ENCODE measurements at regions of chr17 and their contacts with region 1.

Region 1: GRCh38 chr17:29568331-29569244 is at the start of gene TP53I13:
- DNase-seq: peak; percentile 92
- ATAC-seq: peak; percentile 62
- H3K4me3 Mint-ChIP-seq: peak within 1 kb of the TSS; percentile 86
- H3K27ac Mint-ChIP-seq: peak within 1 kb of the TSS; percentile 91
- H3K4me1 Mint-ChIP-seq: peaks cover 26% of the 10 kb centered on the region
- H3K27me3 Mint-ChIP-seq: no peaks in the 10 kb centered on the region
- CTCF ChIP-seq: no peak
- total RNA-seq, gene TP53I13: 46.7 to 50.2 TPM

Region 2: GRCh38 chr17:29533976-29534375 is 34.6 kb before region 1 on chr17:
- CTCF ChIA-PET with region 1: interaction called, 21 read pairs
- POLR2A ChIA-PET with region 1: interaction called, 4 read pairs
- intact Hi-C with region 1: no loop called
- DNase-seq: no peak
- ATAC-seq: no peak
- H3K4me3 Mint-ChIP-seq: no peak overlapping the region
- H3K27ac Mint-ChIP-seq: peak overlapping the region; percentile 14
- H3K4me1 Mint-ChIP-seq: no peaks in the 10 kb centered on the region
- H3K27me3 Mint-ChIP-seq: no peaks in the 10 kb centered on the region
- CTCF ChIP-seq: no peak

Region 3: DNA sequence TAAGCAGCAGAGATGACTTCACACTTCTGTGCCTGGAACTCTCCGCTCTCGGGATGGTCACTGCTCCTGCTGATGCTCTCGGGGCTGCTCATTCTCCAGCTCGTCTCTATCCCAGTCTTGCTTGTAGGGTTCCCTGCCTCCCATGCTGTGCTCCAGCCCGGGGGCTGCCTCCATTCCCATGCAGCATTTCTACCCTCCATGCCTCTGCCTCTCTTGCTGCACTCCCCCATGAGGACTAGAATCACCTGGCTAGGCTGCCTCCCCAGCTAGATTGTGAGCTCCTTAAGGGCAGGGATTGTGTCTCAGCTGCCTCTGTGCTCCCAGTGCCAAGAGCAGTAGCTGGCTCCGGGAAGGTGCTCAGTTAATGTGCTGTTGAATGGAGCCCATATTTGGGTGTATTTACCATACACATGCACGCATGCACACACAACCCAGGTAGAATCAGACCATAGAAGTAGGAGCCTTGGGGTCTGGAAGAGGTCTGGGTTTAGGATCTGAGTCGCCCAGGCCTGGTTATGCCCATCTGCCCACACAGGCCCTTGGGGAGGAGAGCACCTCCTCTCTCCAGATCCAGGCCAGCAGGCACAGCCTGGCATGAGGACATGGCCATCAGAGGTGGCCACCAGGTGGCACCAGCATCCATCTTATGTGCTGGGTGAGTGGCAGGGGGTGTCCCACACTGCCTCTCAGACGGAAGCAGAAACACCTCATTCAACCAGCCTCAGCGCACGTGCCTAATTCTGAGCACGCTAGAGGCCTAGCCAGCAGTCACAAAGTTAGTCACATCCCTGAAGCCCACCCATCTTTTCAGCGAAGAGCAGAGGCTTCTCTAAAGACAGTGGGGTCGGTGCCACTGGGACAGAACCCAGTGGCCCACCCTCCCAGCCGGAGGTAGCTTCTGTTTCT is 11.5 kb after region 1 on chr17:
- CTCF ChIA-PET with region 1: interaction called, 33 read pairs
- POLR2A ChIA-PET with region 1: interaction called, 11 read pairs
- intact Hi-C with region 1: no loop called
- DNase-seq: peak; percentile 97
- ATAC-seq: peak; percentile 97
- H3K4me3 Mint-ChIP-seq: no peak overlapping the region
- H3K27ac Mint-ChIP-seq: peak overlapping the region; percentile 89
- H3K4me1 Mint-ChIP-seq: peaks cover 27% of the 10 kb centered on the region
- H3K27me3 Mint-ChIP-seq: no peaks in the 10 kb centered on the region
- CTCF ChIP-seq: peak; percentile 83

Region 4: DNA sequence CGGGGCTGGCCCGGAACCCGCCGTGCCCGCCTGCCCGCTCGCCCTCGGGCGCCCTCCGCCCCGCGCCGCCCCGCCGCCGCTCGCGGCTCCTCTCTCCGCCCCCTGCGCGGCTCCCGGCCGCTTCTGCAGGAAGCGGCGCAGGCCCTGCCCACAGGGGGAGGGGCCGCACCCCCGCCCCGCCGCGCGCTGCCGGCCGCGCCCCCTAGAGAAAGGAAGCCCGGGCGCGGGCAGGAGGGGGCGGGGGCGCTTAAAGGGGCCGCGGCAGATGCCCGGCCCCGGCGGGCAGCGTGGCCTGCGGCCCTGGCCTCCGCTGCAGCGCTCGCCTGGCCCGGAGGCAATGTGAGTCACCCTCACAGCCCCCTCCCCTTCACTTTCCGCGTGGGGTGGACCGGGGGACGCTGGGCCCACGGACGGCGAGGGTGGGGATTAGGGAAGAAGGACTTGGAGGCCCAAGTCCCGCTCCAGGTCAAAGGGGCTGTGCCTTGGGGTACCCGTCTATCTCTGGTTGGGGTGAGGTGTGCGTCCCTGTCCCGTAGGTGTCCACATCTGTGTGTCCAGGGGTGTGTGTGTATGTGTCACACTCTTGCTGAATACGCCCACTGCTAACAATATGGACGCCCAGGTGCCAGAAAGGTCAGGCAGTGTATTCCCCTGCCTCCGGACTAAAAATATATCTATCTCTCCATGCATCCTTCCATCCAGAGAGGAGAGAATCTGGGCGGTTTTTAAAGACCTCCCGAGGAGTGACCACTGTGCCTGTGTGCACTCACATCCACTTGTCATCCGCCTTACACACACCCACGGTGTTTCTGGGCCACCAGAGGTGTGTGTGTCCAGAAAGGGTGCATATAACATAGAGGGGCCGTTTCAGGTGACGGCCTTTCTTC is 21.2 kb after region 1 on chr17 and contains the start of gene GIT1:
- CTCF ChIA-PET with region 1: interaction called, 102 read pairs
- POLR2A ChIA-PET with region 1: interaction called, 12 read pairs
- intact Hi-C with region 1: no loop called
- DNase-seq: peak; percentile 86
- ATAC-seq: peak; percentile 77
- H3K4me3 Mint-ChIP-seq: peak within 1 kb of the TSS; percentile 87
- H3K27ac Mint-ChIP-seq: peak within 1 kb of the TSS; percentile 93
- H3K4me1 Mint-ChIP-seq: peaks cover 67% of the 10 kb centered on the region
- H3K27me3 Mint-ChIP-seq: no peaks in the 10 kb centered on the region
- CTCF ChIP-seq: no peak
- total RNA-seq, gene GIT1: 54.8 to 59.3 TPM